ENCODE measurements at regions of chr2 and their contacts with region 1.

Region 1: GRCh38 chr2:5433855-5434254 is 258.3 kb upstream of the SOX11 start:
- DNase-seq: no peak
- CTCF ChIP-seq: no peak

Region 2: DNA sequence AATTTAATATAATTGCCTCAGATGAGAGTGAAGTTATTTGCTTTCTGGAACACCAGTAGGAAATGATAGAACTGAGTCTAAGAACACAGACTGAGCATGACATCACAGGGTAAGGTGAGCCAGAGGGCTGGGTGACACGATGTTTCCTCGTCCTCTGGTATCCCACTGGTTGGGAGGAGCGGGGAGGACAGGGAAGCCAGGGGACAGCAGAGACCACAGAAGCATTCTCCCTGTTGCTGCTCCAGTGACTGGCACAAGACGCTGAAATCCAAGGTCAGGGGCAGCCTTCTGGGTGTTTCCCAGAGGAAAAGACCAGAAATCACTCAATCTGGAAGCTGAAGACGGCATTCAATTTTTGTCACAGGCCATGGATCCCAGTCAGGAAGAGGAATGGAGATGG is 105.0 kb before region 1 on chr2:
- in situ Hi-C with region 1: loop called (anchors 25 kb)
- DNase-seq: no peak
- CTCF ChIP-seq: no peak

Region 3: DNA sequence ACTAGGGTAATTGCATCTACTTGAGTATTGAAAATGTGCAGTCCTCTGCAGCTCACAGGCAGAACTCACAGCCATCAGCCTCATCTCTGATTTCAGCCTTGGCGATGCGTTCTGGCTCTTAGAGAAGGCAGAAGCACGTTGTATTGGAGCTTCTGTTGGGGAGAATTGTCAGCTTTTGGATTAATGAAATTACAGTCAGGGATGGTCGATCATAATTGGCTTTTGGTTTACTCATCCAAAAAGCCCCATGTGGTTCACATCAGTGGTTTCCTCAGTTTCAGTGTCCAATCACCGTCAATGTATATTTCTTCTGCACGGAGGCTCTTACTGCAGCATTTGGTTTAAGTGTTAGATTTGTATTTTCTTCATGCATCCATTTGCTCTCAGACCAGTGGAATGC is 39.8 kb after region 1 on chr2:
- in situ Hi-C with region 1: no loop called
- DNase-seq: no peak
- CTCF ChIP-seq: no peak

Region 4: DNA sequence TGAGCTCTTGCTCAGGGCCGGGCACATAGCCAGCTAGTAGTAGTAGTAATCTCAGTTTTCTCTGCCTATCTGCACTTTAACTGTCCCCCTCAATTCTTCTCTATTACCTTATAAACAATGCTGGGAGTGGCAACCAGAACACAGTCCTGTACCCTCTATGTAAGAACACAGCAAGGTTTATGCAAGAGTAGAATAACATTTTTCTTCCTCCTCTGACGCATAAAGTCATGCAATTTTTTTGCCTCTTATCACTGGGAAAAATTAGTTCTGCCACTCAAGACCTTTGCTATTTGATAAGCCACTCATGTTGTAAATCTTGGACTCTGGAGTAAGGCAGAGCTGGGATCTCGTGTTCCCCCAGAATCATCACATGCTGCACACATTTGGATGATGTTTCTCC is 57.7 kb after region 1 on chr2:
- in situ Hi-C with region 1: no loop called
- DNase-seq: no peak
- CTCF ChIP-seq: no peak

Region 5: DNA sequence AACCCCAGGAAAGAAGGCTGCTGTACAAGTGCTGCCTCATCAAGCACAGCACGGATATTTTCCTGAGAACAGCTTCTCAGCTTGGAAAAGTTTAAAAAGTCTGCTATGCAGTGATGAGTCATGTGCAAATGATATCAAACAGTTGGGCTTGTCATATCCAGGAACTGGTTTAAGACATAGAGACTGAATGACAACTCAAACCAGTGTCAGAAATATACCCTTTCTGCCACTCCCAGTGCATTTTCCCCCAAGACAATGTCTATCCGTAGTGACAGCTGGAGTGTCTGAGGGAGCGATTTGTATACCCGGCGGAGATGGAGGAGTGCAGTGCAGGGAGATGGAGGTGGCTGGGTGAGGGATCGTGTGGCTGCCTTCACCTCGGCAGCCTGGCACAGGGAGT is 286.6 kb after region 1 on chr2:
- in situ Hi-C with region 1: no loop called
- DNase-seq: no peak
- CTCF ChIP-seq: no peak